Sigmoid colon (tissue), 7 donors: ENCODE measurements at regions of chr7 and their contacts with region 1.

Region 1: DNA sequence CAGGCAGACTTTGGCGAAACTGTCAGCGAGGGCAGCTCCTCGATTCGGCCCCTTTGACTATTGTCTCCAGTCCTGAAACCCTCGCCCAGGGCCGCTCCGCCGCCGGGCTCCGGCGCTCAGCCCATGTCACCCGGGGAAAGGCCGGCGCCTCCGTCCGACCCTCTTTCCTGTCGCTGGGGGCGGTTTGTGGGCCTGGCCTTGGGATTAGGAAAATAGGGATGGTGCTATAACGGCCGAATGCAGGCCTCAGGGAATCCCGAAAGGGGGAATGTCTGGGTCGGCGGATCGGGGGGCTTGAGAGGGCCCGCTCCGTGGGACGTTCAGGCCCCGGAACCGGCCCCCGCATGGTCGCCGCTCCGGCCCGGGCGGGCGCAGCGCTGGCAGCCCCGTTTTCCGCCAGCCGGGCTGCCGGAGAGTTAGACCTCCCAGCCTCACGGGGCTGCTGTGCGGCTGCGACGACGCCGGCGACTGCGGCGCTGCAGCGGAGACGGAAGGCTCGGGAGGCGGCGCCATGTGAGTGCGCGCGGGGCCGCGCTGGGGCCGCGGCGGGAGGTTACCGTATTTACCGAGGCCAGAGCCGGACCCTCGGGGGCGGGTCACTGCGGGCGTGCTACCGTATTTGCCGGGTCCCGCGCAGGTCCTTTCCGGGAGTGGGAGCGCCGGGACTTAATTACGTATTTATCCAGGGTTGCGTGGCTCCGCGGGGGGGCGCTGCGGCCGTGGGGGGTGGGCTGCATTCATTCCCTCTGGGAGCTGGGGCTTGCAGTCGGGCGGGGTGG is 25.9 kb downstream of the ZNF775 start:
- DNase-seq: peak; percentile 96
- H3K4me3 ChIP-seq: peak overlapping the region; percentile 68 to 74 (median 74)
- H3K27ac ChIP-seq: peak overlapping the region; percentile 95 to 99 (median 96)
- H3K4me1 ChIP-seq: peaks cover 0 to 36% (median 32%) of the 10 kb centered on the region in 4 donors
- H3K27me3 ChIP-seq: no peaks in the 10 kb centered on the region
- CTCF ChIP-seq: peak in 1 of 4 experiments; percentile 35
- EP300 ChIP-seq: no peak
- POLR2A ChIP-seq: peak; percentile 51 to 65

Region 2: DNA sequence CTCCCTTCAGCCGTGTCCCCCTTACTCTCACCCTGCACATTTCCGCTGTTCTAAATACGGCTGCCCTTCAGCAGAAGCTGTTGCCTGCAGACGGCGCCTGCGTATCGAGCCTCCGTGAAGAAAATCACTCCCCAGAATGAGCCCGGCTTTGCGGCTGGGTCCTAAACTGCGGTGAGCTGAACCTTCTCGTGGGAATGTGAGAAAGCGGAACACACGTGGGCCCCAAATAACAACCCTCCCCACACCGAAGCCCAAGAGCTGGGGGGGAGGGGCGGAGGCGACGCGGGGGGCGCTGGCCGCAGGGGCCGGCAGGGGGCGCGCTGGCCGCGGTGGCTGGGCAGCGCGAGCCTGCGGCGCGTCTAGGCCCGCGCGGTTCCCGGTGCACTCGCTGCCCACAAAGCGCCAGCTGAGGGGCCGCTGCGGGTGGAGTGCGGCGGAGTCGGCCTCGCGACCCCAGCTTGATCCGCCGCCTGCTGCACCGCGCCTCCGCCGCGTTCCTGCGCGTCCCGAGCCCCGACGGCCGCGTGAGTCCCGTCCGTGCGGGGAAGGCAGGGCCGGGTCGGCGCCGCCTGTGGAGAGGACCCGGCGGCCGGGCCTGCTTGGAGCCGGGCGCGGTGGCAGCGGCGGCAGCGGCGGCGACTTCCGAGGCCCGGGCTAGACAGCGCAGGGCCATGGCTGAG is 1257.8 kb before region 1 on chr7 and contains the start of gene ZNF398:
- intact Hi-C with region 1: loop called (anchors 5 kb)
- DNase-seq: peak; percentile 77
- H3K4me3 ChIP-seq: peak within 1 kb of the TSS; percentile 72 to 92 (median 84)
- H3K27ac ChIP-seq: peak within 1 kb of the TSS; percentile 89 to 94 (median 92)
- H3K4me1 ChIP-seq: peaks cover 0 to 31% (median 21%) of the 10 kb centered on the region in 4 donors
- H3K27me3 ChIP-seq: no peaks in the 10 kb centered on the region
- CTCF ChIP-seq: peak; percentile 21 to 84 (median 31)
- EP300 ChIP-seq: no peak
- POLR2A ChIP-seq: no peak
- total RNA-seq, gene ZNF398: 13.0 to 19.7 (median 18.4) TPM

Region 3: DNA sequence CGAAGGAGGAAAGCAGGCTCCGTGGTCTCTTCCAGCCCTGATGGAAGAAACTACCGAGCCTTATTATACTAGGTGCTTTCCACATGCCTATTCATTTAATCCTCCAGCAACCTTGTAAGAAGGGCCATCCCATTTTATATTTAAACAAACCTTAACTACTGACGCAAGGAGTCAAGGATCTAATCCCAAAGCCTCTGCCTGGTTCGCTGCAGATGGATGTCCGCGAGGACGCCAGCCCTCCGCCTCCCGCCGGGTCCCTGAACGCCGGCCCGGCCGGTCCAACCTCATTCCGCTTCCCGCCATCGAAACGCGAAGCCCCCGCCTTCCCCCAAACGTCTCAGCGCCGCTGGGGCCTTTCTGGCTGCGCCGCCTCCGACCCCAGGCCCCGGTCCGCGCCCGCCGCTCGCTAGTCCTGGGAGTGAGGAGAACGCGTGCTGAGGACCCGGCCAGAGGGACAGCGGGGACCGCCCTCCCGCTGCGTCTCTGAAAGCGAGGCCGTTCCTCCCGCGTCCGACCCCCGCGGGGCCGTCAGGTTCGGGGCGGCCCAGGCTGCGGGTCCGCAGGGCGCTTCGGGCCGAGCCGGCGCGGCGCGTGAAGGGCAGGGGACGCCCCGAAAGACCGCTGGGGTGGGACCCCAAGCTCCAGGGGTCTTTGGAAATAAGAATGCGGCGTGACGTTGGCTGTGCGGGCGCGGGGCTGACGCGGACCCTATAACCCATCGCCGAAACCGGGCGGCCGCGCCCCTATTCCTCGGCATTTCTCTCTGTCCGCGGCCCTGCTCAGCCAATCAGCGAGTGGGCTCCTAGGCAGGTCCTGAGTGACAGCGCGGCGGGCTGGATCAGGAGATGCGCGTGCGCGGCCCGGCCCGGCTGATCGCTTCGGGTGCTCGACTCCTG is 531.7 kb before region 1 on chr7 and contains the start of gene ATP6V0E2:
- intact Hi-C with region 1: loop called (anchors 10 kb)
- DNase-seq: peak; percentile 98
- H3K4me3 ChIP-seq: peak within 1 kb of the TSS; percentile 73 to 93 (median 82)
- H3K27ac ChIP-seq: peak within 1 kb of the TSS; percentile 94 to 99 (median 98)
- H3K4me1 ChIP-seq: peaks cover 0 to 24% (median 17%) of the 10 kb centered on the region in 4 donors
- H3K27me3 ChIP-seq: no peaks in the 10 kb centered on the region
- CTCF ChIP-seq: no peak
- EP300 ChIP-seq: no peak
- POLR2A ChIP-seq: peak in 1 of 2 donors; percentile 51
- total RNA-seq, gene ATP6V0E2: 16.6 to 41.7 (median 29.9) TPM

Region 4: GRCh38 chr7:150311711-150312110 is 93.3 kb before region 1 on chr7:
- intact Hi-C with region 1: no loop called
- DNase-seq: no peak
- H3K4me3 ChIP-seq: no peak overlapping the region
- H3K27ac ChIP-seq: no peak overlapping the region
- H3K4me1 ChIP-seq: no peaks in the 10 kb centered on the region
- H3K27me3 ChIP-seq: no peaks in the 10 kb centered on the region
- CTCF ChIP-seq: no peak
- EP300 ChIP-seq: no peak
- POLR2A ChIP-seq: no peak

Region 5: GRCh38 chr7:150368096-150368883 is 36.7 kb before region 1 on chr7 and contains the start of gene REPIN1:
- intact Hi-C with region 1: loop called (anchors 5 kb)
- DNase-seq: peak; percentile 97
- H3K4me3 ChIP-seq: peak within 1 kb of the TSS; percentile 69 to 92 (median 75)
- H3K27ac ChIP-seq: peak within 1 kb of the TSS; percentile 92 to 97 (median 95)
- H3K4me1 ChIP-seq: peaks cover 0 to 41% (median 34%) of the 10 kb centered on the region in 4 donors
- H3K27me3 ChIP-seq: no peaks in the 10 kb centered on the region
- CTCF ChIP-seq: no peak
- EP300 ChIP-seq: peak in 2 of 4 donors; percentile 11 to 57
- POLR2A ChIP-seq: peak in 1 of 2 donors; percentile 29
- total RNA-seq, gene REPIN1: 56.3 to 63.7 (median 57.0) TPM

Region 6: GRCh38 chr7:150586785-150587152 is 181.8 kb after region 1 on chr7:
- intact Hi-C with region 1: no loop called
- DNase-seq: no peak
- H3K4me3 ChIP-seq: no peak overlapping the region
- H3K27ac ChIP-seq: peak overlapping the region; percentile 35 to 56 (median 44)
- H3K4me1 ChIP-seq: no peaks in the 10 kb centered on the region
- H3K27me3 ChIP-seq: no peaks in the 10 kb centered on the region
- CTCF ChIP-seq: no peak
- EP300 ChIP-seq: peak in 1 of 4 donors; percentile 28
- POLR2A ChIP-seq: no peak

Region 7: DNA sequence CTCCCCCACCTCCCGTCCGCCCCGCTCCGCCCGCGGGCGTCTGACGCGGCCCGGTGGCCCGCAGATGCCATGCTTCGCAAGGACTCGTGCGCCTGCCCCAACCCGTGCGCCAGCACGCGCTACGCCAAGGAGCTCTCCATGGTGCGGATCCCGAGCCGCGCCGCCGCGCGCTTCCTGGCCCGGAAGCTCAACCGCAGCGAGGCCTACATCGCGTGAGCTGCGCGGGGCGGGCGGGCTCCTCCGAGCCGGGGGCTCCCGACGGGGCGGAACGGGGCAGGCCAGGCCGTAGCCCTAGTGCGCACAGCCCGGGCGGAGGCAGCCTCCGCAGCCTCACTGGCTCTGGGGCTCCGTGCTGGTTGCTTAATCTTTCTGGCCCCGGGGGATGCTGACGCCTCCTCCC is 646.1 kb after region 1 on chr7:
- intact Hi-C with region 1: no loop called
- DNase-seq: no peak
- H3K4me3 ChIP-seq: peak overlapping the region in 1 of 4 donors; percentile 9
- H3K27ac ChIP-seq: no peak overlapping the region
- H3K4me1 ChIP-seq: peaks cover 0 to 29% (median 19%) of the 10 kb centered on the region in 4 donors
- H3K27me3 ChIP-seq: peaks cover 0 to 10% (median 0%) of the 10 kb centered on the region in 3 donors
- CTCF ChIP-seq: no peak
- EP300 ChIP-seq: no peak
- POLR2A ChIP-seq: no peak